ENCODE measurements at regions of chr15 and their contacts with region 1.

Region 1: GRCh38 chr15:99692825-99693224 is 40.4 kb downstream of the LYSMD4 start:
- DNase-seq: peak in 1 of 4 donors; percentile 24
- ATAC-seq: no peak
- H3K4me3 ChIP-seq: no peak overlapping the region
- H3K27ac ChIP-seq: no peak overlapping the region
- H3K4me1 ChIP-seq: no peaks in the 10 kb centered on the region
- H3K27me3 ChIP-seq: no peaks in the 10 kb centered on the region
- CTCF ChIP-seq: no peak
- POLR2A ChIP-seq: no peak

Region 2: GRCh38 chr15:99578809-99579208 is 114.0 kb before region 1 on chr15:
- intact Hi-C with region 1: loop called (anchors 10 kb)
- DNase-seq: no peak
- ATAC-seq: no peak
- H3K4me3 ChIP-seq: no peak overlapping the region
- H3K27ac ChIP-seq: no peak overlapping the region
- H3K4me1 ChIP-seq: peaks cover 16% of the 10 kb centered on the region
- H3K27me3 ChIP-seq: no peaks in the 10 kb centered on the region
- CTCF ChIP-seq: no peak
- POLR2A ChIP-seq: no peak

Region 3: DNA sequence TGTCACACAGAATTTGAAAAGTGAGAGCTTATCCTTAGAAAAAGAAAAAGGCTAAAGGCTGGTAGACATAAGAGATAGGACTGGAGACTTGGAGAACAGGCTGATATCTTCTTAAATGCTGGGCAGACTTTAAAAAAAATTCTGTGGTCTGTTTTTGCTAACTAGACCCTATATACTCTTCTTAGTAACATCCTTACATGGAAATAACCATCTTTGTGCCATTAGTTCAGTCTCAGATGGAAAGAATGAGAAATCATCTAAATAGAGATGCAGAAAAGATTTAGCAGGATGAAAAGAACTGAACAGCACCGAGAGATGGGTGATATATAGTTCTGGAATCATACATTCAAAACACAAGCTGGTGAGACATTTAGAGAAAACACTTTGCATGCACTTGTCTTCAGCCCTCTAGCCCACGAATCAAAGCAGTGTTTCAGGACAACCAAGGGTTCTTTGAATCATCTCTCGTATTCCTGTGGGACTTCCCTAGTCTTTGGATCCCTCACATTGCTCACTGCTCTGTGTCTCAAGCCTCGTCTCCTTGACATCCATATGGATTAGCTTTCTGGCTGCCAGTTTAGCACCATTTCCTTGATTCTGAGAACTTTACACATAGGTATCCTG is 133.4 kb after region 1 on chr15:
- intact Hi-C with region 1: no loop called
- DNase-seq: no peak
- ATAC-seq: no peak
- H3K4me3 ChIP-seq: no peak overlapping the region
- H3K27ac ChIP-seq: no peak overlapping the region
- H3K4me1 ChIP-seq: no peaks in the 10 kb centered on the region
- H3K27me3 ChIP-seq: no peaks in the 10 kb centered on the region
- CTCF ChIP-seq: no peak
- POLR2A ChIP-seq: no peak

Region 4: GRCh38 chr15:99967841-99968371 is 275.1 kb after region 1 on chr15:
- intact Hi-C with region 1: no loop called
- DNase-seq: no peak
- ATAC-seq: no peak
- H3K4me3 ChIP-seq: no peak overlapping the region
- H3K27ac ChIP-seq: no peak overlapping the region
- H3K4me1 ChIP-seq: no peaks in the 10 kb centered on the region
- H3K27me3 ChIP-seq: no peaks in the 10 kb centered on the region
- CTCF ChIP-seq: no peak
- POLR2A ChIP-seq: no peak

Measured in body of pancreas (tissue), 4 donors.